ENCODE measurements at regions of chr11 and their contacts with region 1.

Region 1: GRCh38 chr11:61332797-61333549 is at the starts of genes DDB1 and TKFC:
- DNase-seq: peak; percentile 93 to 99 (median 97)
- ATAC-seq: peak; percentile 93
- H3K4me3 ChIP-seq: peak within 1 kb of the TSS; percentile 78 to 80
- H3K4me3 Mint-ChIP-seq: peak within 1 kb of the TSS; percentile 95
- H3K27ac ChIP-seq: peak within 1 kb of the TSS; percentile 68 to 94
- H3K27ac Mint-ChIP-seq: peak within 1 kb of the TSS; percentile 98
- H3K4me1 ChIP-seq: peaks cover 36% of the 10 kb centered on the region
- H3K4me1 Mint-ChIP-seq: peaks cover 57% of the 10 kb centered on the region
- H3K27me3 ChIP-seq: no peaks in the 10 kb centered on the region
- H3K27me3 Mint-ChIP-seq: no peaks in the 10 kb centered on the region
- CTCF ChIP-seq: no peak
- total RNA-seq, gene DDB1: 196 to 201 TPM
- total RNA-seq, gene TKFC: 15.8 to 16.1 TPM

Region 2: GRCh38 chr11:60906132-60906972 is 426.6 kb before region 1 on chr11 and contains the start of gene PRPF19:
- CTCF ChIA-PET with region 1: no interaction called
- POLR2A ChIA-PET with region 1: no interaction called
- intact Hi-C with region 1: loop called (anchors 1 to 10 kb)
- DNase-seq: peak; percentile 98 to 100 (median 99)
- ATAC-seq: peak; percentile 92
- H3K4me3 ChIP-seq: peak within 1 kb of the TSS; percentile 61 to 81
- H3K4me3 Mint-ChIP-seq: peak within 1 kb of the TSS; percentile 89
- H3K27ac ChIP-seq: peak within 1 kb of the TSS; percentile 79 to 93
- H3K27ac Mint-ChIP-seq: peak within 1 kb of the TSS; percentile 99
- H3K4me1 ChIP-seq: peaks cover 45% of the 10 kb centered on the region
- H3K4me1 Mint-ChIP-seq: peaks cover 71% of the 10 kb centered on the region
- H3K27me3 ChIP-seq: no peaks in the 10 kb centered on the region
- H3K27me3 Mint-ChIP-seq: no peaks in the 10 kb centered on the region
- CTCF ChIP-seq: no peak
- total RNA-seq, gene PRPF19: 96.1 to 99.4 TPM

Region 3: DNA sequence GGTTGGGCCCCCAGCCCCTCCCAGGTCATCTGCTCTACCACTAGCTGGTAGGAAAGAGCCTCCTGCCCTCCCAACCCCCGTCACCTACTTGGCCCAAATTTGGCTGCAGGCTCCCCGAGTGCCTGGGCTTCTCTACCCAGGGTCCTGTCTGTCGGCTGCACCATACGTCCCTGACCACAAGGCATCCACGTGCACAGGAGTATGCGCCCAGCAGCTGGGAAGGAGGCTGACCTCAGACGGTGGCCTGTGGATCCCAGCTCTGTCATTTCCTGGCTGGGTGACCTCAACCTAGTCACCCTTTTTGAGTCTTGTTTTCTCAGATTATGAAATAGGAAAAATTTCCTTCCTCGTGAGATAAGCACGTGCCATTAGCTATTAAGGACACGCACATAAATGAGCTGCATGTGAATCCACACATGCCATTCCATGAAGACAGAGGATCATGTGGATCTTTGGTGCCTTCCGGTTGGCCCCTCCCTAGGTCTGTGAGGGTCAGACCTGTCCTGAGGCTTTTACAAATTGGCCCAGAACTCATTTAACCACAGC is 15.0 kb after region 1 on chr11:
- CTCF ChIA-PET with region 1: interaction called, 26 read pairs
- POLR2A ChIA-PET with region 1: no interaction called
- intact Hi-C with region 1: no loop called
- DNase-seq: peak in 1 of 9 experiments; percentile 40
- ATAC-seq: no peak
- H3K4me3 ChIP-seq: no peak overlapping the region
- H3K4me3 Mint-ChIP-seq: no peak overlapping the region
- H3K27ac ChIP-seq: no peak overlapping the region
- H3K27ac Mint-ChIP-seq: peak overlapping the region; percentile 52
- H3K4me1 ChIP-seq: no peaks in the 10 kb centered on the region
- H3K4me1 Mint-ChIP-seq: no peaks in the 10 kb centered on the region
- H3K27me3 ChIP-seq: no peaks in the 10 kb centered on the region
- H3K27me3 Mint-ChIP-seq: no peaks in the 10 kb centered on the region
- CTCF ChIP-seq: no peak

Region 4: DNA sequence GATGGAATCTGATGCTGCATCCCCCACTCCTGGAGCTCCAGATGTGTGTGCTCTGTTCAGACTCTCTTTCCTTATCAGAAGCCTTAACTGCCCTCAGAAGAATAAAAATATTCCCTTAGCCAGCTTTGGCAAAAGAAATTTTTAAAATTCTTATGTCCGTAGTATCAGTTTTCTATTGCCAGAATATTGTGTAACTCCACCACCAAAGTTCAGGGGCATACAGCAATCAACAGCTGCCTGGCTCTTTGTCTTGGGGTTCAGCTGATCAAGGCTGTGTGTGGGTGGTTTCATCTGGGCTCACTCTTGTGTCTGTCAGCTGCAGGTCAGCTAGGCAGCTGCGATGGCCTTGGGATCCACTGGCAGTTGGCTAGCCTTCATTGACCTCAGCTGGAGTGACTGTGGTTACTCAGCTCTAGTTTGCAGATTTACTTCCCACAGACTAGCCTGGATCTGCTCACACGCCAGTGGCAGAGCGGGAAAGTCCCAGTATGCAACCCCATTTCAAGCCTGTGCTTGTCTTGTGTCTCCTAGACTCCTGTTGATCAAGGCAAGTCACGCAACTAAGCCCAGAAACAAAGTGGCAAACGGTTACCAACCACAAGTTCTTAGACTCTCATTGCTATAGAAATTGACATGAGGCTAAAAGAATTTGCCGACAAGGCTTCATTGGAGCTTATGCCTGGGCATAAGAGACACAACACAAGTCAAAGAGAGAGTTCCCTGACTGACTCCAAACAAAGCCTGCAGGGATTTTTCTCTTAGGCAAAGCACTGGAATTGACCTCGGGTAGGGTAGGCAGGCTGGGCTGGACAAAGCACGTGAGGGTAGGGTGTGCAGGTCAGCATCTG is 36.6 kb after region 1 on chr11:
- CTCF ChIA-PET with region 1: interaction called, 106 read pairs
- POLR2A ChIA-PET with region 1: interaction called, 4 read pairs
- intact Hi-C with region 1: no loop called
- DNase-seq: no peak
- ATAC-seq: no peak
- H3K4me3 ChIP-seq: no peak overlapping the region
- H3K4me3 Mint-ChIP-seq: no peak overlapping the region
- H3K27ac ChIP-seq: no peak overlapping the region
- H3K27ac Mint-ChIP-seq: no peak overlapping the region
- H3K4me1 ChIP-seq: no peaks in the 10 kb centered on the region
- H3K4me1 Mint-ChIP-seq: peaks cover 4% of the 10 kb centered on the region
- H3K27me3 ChIP-seq: no peaks in the 10 kb centered on the region
- H3K27me3 Mint-ChIP-seq: no peaks in the 10 kb centered on the region
- CTCF ChIP-seq: no peak

Region 5: DNA sequence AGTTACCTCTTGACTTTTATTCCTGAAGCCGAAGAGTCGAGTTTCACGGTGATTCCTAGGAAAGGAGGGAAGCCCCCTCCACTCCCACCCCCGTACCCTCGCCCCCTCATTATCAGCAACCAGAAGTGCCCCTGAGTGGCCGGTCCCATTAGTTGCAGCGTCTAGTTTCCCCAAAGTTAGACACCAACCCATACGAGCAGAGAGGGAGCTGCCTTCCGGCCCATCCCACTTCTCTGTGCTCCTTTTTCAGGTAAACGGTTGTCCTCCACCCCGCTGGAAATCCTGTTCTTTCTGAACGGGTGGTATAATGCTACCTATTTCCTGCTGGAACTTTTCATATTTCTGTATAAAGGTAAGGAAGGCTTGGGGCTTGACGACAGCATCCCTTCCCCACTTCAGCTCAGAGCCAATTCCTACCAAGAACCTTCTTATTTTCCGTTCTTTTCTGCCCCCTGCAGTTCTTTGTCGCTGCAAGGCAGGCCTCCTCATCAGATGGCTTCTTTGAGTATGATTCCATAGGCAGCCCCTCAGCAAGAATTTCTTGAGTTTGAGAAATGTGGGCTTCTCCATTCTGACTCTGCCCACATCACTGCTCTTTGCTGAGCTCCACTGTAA is 60.1 kb after region 1 on chr11:
- CTCF ChIA-PET with region 1: interaction called, 470 read pairs
- POLR2A ChIA-PET with region 1: interaction called, 21 read pairs
- intact Hi-C with region 1: loop called (anchors 1 to 2 kb)
- DNase-seq: peak in 6 of 9 experiments; percentile 9 to 59 (median 34)
- ATAC-seq: peak; percentile 47
- H3K4me3 ChIP-seq: peak overlapping the region; percentile 57 to 84
- H3K4me3 Mint-ChIP-seq: peak overlapping the region; percentile 96
- H3K27ac ChIP-seq: peak overlapping the region; percentile 70 to 90
- H3K27ac Mint-ChIP-seq: peak overlapping the region; percentile 99
- H3K4me1 ChIP-seq: peaks cover 8% of the 10 kb centered on the region
- H3K4me1 Mint-ChIP-seq: peaks cover 22% of the 10 kb centered on the region
- H3K27me3 ChIP-seq: no peaks in the 10 kb centered on the region
- H3K27me3 Mint-ChIP-seq: no peaks in the 10 kb centered on the region
- CTCF ChIP-seq: peak; percentile 28

Region 6: GRCh38 chr11:61516675-61517572 is 184.0 kb after region 1 on chr11:
- CTCF ChIA-PET with region 1: interaction called, 3 read pairs
- POLR2A ChIA-PET with region 1: no interaction called
- intact Hi-C with region 1: loop called in 1 of 2 experiments (anchors 2 kb)
- DNase-seq: peak; percentile 39 to 79 (median 63)
- ATAC-seq: peak; percentile 83
- H3K4me3 ChIP-seq: peak overlapping the region; percentile 12 to 32
- H3K4me3 Mint-ChIP-seq: peak overlapping the region; percentile 70
- H3K27ac ChIP-seq: no peak overlapping the region
- H3K27ac Mint-ChIP-seq: no peak overlapping the region
- H3K4me1 ChIP-seq: peaks cover 10% of the 10 kb centered on the region
- H3K4me1 Mint-ChIP-seq: peaks cover 9% of the 10 kb centered on the region
- H3K27me3 ChIP-seq: no peaks in the 10 kb centered on the region
- H3K27me3 Mint-ChIP-seq: peaks cover 27% of the 10 kb centered on the region
- CTCF ChIP-seq: peak; percentile 99

Region 7: DNA sequence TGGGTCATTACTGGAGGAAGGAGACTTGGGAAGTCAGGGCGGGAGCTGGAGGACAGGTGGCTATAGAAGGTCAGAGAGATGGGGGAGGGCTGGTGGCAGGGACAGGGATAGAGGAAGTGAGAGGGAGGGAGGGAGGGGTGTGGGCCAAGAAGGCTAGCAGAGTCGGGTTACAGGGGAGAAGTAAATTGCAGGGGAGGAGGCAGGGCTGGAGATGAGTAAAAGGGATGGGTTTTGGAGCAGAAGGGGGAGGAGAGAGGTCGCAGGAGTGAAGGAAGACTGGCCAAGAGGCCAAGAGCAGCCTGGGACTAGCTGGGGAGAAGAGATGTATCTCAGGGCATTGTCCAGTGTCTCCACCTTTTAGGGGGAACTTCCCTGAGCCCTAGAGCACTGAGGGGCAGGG is 208.6 kb after region 1 on chr11:
- CTCF ChIA-PET with region 1: no interaction called
- POLR2A ChIA-PET with region 1: no interaction called
- intact Hi-C with region 1: no loop called
- DNase-seq: no peak
- ATAC-seq: no peak
- H3K4me3 ChIP-seq: no peak overlapping the region
- H3K4me3 Mint-ChIP-seq: no peak overlapping the region
- H3K27ac ChIP-seq: no peak overlapping the region
- H3K27ac Mint-ChIP-seq: no peak overlapping the region
- H3K4me1 ChIP-seq: no peaks in the 10 kb centered on the region
- H3K4me1 Mint-ChIP-seq: no peaks in the 10 kb centered on the region
- H3K27me3 ChIP-seq: peaks cover 0 to 3% of the 10 kb centered on the region in 2 experiments
- H3K27me3 Mint-ChIP-seq: peaks cover 26% of the 10 kb centered on the region
- CTCF ChIP-seq: no peak